CD4-positive, alpha-beta T cell (primary cell): ENCODE measurements at regions of chr6 and their contacts with region 1.

Region 1: DNA sequence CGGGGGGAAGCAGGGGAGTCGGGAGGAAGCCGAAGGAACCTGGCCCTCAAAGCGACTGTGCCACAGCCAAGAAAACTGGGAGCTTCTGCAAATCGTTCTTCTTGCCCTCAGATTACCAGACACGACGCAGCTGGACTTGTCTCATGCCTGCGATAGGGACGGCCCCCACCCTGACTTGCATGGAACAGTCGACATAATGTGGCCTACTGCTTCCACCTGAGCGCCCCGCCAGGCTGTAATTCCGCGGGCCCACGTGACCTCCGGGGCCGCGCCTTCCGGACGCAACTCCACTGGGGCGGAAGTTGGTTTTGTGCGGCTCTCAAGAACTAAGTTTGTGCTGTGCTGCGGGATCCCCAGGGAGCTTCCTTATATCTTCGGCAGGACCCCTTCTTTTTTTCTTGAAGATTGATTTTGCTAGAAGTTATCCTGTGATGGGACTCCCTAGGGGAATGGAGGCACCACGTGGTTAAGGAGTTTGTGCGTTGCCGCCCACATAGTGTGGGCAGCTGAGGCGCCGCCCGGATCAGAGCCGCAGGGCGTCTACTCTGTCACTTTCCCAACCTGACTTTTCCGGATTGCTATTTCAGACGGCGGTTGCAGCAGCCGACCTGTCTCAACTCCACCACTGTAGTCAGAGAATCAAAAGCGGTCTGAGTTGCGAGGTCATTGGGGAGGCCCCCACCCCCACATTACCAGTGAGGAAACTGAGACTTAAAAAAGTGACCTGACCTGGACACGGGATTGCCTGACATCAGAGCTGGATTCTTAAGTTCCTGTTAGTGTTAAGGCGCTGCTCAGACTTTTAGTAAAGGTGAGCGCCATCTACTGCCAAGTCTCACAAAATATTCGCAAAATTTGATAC is 540 bp upstream of the CD164 start:
- DNase-seq: peak; percentile 85 to 97 (median 91)
- ATAC-seq: peak; percentile 71
- H3K4me3 ChIP-seq: peak overlapping the region; percentile 81
- H3K4me3 Mint-ChIP-seq: peak overlapping the region; percentile 97
- H3K27ac ChIP-seq: peak overlapping the region; percentile 96 to 99
- H3K27ac Mint-ChIP-seq: peak overlapping the region; percentile 93
- H3K4me1 ChIP-seq: peaks cover 23% of the 10 kb centered on the region
- H3K4me1 Mint-ChIP-seq: peaks cover 57% of the 10 kb centered on the region
- H3K27me3 ChIP-seq: no peaks in the 10 kb centered on the region
- H3K27me3 Mint-ChIP-seq: no peaks in the 10 kb centered on the region
- CTCF ChIP-seq: peak; percentile 84

Region 2: GRCh38 chr6:108260809-108261569 is 1121.8 kb before region 1 on chr6 and contains the start of gene SNX3:
- CTCF ChIA-PET with region 1: no interaction called
- POLR2A ChIA-PET with region 1: interaction called, 18 read pairs
- intact Hi-C with region 1: loop called in 1 of 2 experiments (anchors 10 kb)
- DNase-seq: peak; percentile 71 to 95 (median 83)
- ATAC-seq: peak; percentile 80
- H3K4me3 ChIP-seq: peak within 1 kb of the TSS; percentile 98
- H3K4me3 Mint-ChIP-seq: peak within 1 kb of the TSS; percentile 88
- H3K27ac ChIP-seq: peak within 1 kb of the TSS; percentile 88 to 90
- H3K27ac Mint-ChIP-seq: peak within 1 kb of the TSS; percentile 91
- H3K4me1 ChIP-seq: peaks cover 34% of the 10 kb centered on the region
- H3K4me1 Mint-ChIP-seq: peaks cover 36% of the 10 kb centered on the region
- H3K27me3 ChIP-seq: no peaks in the 10 kb centered on the region
- H3K27me3 Mint-ChIP-seq: no peaks in the 10 kb centered on the region
- CTCF ChIP-seq: no peak
- total RNA-seq, gene SNX3: 39.8 to 40.8 TPM

Region 3: DNA sequence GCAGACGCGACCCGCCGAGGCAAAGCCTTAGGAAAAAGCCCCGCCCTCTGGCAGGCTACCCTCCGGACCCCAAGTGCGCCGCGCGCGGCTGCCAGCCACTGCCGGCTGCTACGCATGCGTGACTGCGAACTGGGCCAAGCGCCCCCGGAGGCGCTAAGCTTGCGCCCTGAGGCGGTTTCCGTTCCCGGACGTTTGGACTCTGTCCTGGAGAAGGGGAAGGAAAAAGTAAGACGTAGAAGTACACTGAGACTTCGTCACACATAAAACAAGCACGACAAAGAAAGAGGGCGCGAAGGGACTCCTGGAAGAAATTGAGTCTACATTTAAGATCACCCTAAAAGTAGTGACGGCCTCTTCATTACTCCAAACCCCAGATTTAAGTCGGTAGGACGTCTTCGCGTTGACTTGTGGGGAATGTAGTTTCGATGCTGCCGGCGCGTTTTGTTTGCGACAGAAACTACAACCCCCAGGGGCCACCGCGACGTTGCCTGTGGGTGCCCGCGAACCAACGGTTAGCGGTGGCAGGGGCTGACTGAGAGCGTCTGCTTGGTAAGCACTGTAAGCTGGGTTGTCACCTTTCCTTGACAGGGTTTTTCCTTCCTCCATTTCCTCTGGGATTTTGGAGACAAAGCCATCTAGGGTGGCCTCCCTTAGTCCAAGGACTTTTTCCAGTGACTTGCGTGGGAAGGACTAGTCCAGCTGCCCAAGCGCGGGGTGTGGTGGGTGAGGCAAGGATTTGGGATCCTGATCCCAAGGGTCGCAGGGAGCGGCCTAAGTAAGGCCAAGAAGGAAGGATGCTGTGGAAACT is 287.6 kb before region 1 on chr6 and contains the start of gene CEP57L1:
- CTCF ChIA-PET with region 1: interaction called, 4 read pairs
- POLR2A ChIA-PET with region 1: interaction called, 51 read pairs
- intact Hi-C with region 1: loop called (anchors 2 kb)
- DNase-seq: peak; percentile 89 to 98 (median 92)
- ATAC-seq: peak; percentile 81
- H3K4me3 ChIP-seq: peak within 1 kb of the TSS; percentile 80
- H3K4me3 Mint-ChIP-seq: peak within 1 kb of the TSS; percentile 96
- H3K27ac ChIP-seq: peak within 1 kb of the TSS; percentile 95 to 98
- H3K27ac Mint-ChIP-seq: peak within 1 kb of the TSS; percentile 98
- H3K4me1 ChIP-seq: peaks cover 15% of the 10 kb centered on the region
- H3K4me1 Mint-ChIP-seq: peaks cover 56% of the 10 kb centered on the region
- H3K27me3 ChIP-seq: no peaks in the 10 kb centered on the region
- H3K27me3 Mint-ChIP-seq: no peaks in the 10 kb centered on the region
- CTCF ChIP-seq: no peak
- total RNA-seq, gene CEP57L1: 3.8 to 4.8 TPM

Region 4: GRCh38 chr6:109279628-109280027 is 103.2 kb before region 1 on chr6:
- CTCF ChIA-PET with region 1: no interaction called
- POLR2A ChIA-PET with region 1: no interaction called
- intact Hi-C with region 1: no loop called
- DNase-seq: no peak
- ATAC-seq: no peak
- H3K4me3 ChIP-seq: no peak overlapping the region
- H3K4me3 Mint-ChIP-seq: no peak overlapping the region
- H3K27ac ChIP-seq: no peak overlapping the region
- H3K27ac Mint-ChIP-seq: no peak overlapping the region
- H3K4me1 ChIP-seq: no peaks in the 10 kb centered on the region
- H3K4me1 Mint-ChIP-seq: no peaks in the 10 kb centered on the region
- H3K27me3 ChIP-seq: no peaks in the 10 kb centered on the region
- H3K27me3 Mint-ChIP-seq: no peaks in the 10 kb centered on the region
- CTCF ChIP-seq: no peak

Region 5: GRCh38 chr6:109440331-109441068 is 57.7 kb after region 1 on chr6 and contains the starts of genes PPIL6 and SMPD2:
- CTCF ChIA-PET with region 1: interaction called, 29 read pairs
- POLR2A ChIA-PET with region 1: interaction called, 102 read pairs
- intact Hi-C with region 1: loop called in 1 of 2 experiments (anchors 1 kb)
- DNase-seq: peak; percentile 54 to 92 (median 73)
- ATAC-seq: peak; percentile 75
- H3K4me3 ChIP-seq: peak within 1 kb of the TSS; percentile 81
- H3K4me3 Mint-ChIP-seq: peak within 1 kb of the TSS; percentile 95
- H3K27ac ChIP-seq: peak within 1 kb of the TSS; percentile 74 to 82
- H3K27ac Mint-ChIP-seq: peak within 1 kb of the TSS; percentile 93
- H3K4me1 ChIP-seq: peaks cover 39% of the 10 kb centered on the region
- H3K4me1 Mint-ChIP-seq: peaks cover 27% of the 10 kb centered on the region
- H3K27me3 ChIP-seq: no peaks in the 10 kb centered on the region
- H3K27me3 Mint-ChIP-seq: no peaks in the 10 kb centered on the region
- CTCF ChIP-seq: peak; percentile 4
- total RNA-seq, gene PPIL6: 0.84 to 1.3 TPM
- total RNA-seq, gene SMPD2: 25.7 to 27.3 TPM

Region 6: GRCh38 chr6:109482905-109483735 is 100.3 kb after region 1 on chr6 and contains the start of gene ZBTB24:
- CTCF ChIA-PET with region 1: interaction called, 14 read pairs
- POLR2A ChIA-PET with region 1: interaction called, 39 read pairs
- intact Hi-C with region 1: loop called (anchors 2 kb)
- DNase-seq: peak; percentile 78 to 97 (median 88)
- ATAC-seq: peak; percentile 87
- H3K4me3 ChIP-seq: peak within 1 kb of the TSS; percentile 85
- H3K4me3 Mint-ChIP-seq: peak within 1 kb of the TSS; percentile 96
- H3K27ac ChIP-seq: peak within 1 kb of the TSS; percentile 68 to 77
- H3K27ac Mint-ChIP-seq: peak within 1 kb of the TSS; percentile 79
- H3K4me1 ChIP-seq: peaks cover 36% of the 10 kb centered on the region
- H3K4me1 Mint-ChIP-seq: peaks cover 55% of the 10 kb centered on the region
- H3K27me3 ChIP-seq: no peaks in the 10 kb centered on the region
- H3K27me3 Mint-ChIP-seq: no peaks in the 10 kb centered on the region
- CTCF ChIP-seq: no peak
- total RNA-seq, gene ZBTB24: 10.4 to 10.5 TPM

Region 7: DNA sequence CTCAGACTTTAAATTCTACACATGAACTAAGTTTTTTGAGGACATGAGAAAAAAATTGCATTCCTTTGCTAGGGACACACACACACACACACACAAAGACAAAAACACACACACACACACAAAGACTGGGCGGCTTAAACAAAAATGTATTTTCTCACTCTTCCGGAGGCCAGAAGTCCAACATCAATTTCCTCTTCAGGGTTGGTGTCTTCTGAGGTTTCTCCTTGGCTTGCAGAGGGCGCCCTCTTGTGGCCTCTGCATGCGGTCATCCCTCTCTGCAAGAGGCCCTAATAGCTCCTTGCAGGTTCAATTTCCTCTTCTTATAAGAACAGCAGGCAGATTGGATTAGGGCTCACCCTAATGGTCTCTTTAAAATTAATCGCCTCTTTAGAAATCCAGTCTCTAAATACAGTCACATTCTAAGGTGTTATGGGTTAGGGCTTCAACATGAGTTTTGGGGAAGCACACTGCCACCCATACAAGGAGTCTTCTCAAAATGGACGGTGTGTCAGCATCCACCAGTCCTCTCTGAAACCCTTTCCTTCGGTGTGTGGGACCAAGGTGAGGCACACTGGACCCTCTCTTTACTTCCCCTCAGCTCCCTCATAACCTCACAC is 656.7 kb after region 1 on chr6:
- CTCF ChIA-PET with region 1: interaction called, 13 read pairs
- POLR2A ChIA-PET with region 1: interaction called, 12 read pairs
- intact Hi-C with region 1: loop called in 1 of 2 experiments (anchors 5 kb)
- DNase-seq: peak; percentile 66 to 89 (median 76)
- ATAC-seq: peak; percentile 80
- H3K4me3 ChIP-seq: peak overlapping the region; percentile 47
- H3K4me3 Mint-ChIP-seq: peak overlapping the region; percentile 90
- H3K27ac ChIP-seq: peak overlapping the region; percentile 39 to 44
- H3K27ac Mint-ChIP-seq: peak overlapping the region; percentile 87
- H3K4me1 ChIP-seq: peaks cover 11% of the 10 kb centered on the region
- H3K4me1 Mint-ChIP-seq: peaks cover 13% of the 10 kb centered on the region
- H3K27me3 ChIP-seq: no peaks in the 10 kb centered on the region
- H3K27me3 Mint-ChIP-seq: no peaks in the 10 kb centered on the region
- CTCF ChIP-seq: peak; percentile 89